ENCODE measurements at regions of chr18 and their contacts with region 1.

Region 1: DNA sequence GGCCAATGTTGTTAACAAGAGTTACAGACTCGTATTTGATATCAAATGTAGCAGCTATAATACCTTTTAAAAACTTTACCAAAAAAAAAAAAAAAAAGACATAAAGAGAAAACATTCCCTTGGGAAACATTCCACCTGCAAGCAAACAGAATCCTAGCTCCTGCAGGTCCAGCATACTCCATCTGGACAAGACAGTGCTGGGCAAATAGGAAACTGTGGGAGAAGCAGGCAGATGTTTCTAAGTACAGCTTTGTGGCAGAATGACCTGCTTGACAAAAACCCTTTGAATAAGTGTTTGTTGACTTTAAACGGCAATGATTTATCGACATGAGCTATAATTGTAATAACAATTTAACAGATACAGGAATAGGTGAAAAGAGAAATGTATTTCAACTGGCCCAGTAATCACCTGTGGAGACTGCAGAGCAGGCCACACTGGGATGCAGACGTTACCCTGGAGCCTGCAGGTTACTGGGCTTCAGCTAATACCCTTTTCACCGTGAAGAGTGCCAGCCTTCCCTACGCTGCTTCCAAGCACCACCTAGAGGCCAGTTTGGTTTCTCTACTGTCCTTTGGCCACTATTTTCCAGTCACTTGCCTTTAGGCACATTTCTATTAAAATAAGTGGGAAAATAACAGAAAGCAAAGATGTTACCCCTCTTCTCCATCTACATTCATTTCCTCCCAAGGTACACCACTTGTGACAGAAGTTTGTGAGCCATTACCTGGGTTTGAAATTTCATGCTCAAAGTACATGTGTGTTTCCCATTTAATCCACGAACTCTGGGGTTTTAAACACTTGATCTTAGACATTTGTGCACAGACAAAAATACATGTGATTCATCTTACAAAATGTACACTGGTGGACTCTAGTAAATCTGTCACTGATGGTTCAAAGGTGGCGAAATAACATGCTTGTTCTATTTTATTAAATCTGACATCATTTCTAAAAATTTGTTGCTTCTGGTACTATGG is 96.9 kb upstream of the ZNF397 start:
- DNase-seq: peak; percentile 51
- ATAC-seq: peak; percentile 65
- H3K4me3 Mint-ChIP-seq: no peak overlapping the region
- H3K27ac Mint-ChIP-seq: no peak overlapping the region
- H3K4me1 Mint-ChIP-seq: peaks cover 2% of the 10 kb centered on the region
- H3K27me3 Mint-ChIP-seq: no peaks in the 10 kb centered on the region
- CTCF ChIP-seq: peak; percentile 41

Region 2: GRCh38 chr18:35005963-35006577 is 137.8 kb before region 1 on chr18:
- CTCF ChIA-PET with region 1: interaction called, 24 read pairs
- POLR2A ChIA-PET with region 1: no interaction called
- intact Hi-C with region 1: loop called (anchors 2 kb)
- DNase-seq: no peak
- ATAC-seq: peak; percentile 83
- H3K4me3 Mint-ChIP-seq: no peak overlapping the region
- H3K27ac Mint-ChIP-seq: no peak overlapping the region
- H3K4me1 Mint-ChIP-seq: no peaks in the 10 kb centered on the region
- H3K27me3 Mint-ChIP-seq: no peaks in the 10 kb centered on the region
- CTCF ChIP-seq: peak; percentile 68

Region 3: DNA sequence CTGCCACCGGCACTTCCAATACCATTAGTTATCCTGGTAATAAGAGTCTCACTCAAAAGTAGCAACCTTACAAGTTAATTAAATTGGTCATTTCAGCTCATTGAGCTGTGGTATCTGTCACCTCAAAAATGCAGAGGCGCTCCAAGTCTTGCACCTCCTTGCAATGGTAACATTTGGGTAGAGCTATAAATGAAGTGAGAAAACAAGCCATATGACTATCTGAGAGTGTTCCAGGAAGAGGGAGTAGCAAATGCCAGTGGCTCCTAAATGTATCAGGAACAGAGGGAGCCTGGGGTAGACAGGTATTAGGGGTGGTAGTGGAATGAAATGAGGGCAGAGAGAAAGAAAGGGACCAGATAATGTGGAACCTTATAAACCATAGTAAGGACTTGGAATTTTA is 152.2 kb after region 1 on chr18:
- CTCF ChIA-PET with region 1: no interaction called
- POLR2A ChIA-PET with region 1: no interaction called
- intact Hi-C with region 1: no loop called
- DNase-seq: no peak
- ATAC-seq: no peak
- H3K4me3 Mint-ChIP-seq: no peak overlapping the region
- H3K27ac Mint-ChIP-seq: no peak overlapping the region
- H3K4me1 Mint-ChIP-seq: peaks cover 34% of the 10 kb centered on the region
- H3K27me3 Mint-ChIP-seq: no peaks in the 10 kb centered on the region
- CTCF ChIP-seq: no peak

Region 4: GRCh38 chr18:35361570-35362321 is 217.8 kb after region 1 on chr18:
- CTCF ChIA-PET with region 1: no interaction called
- POLR2A ChIA-PET with region 1: no interaction called
- intact Hi-C with region 1: no loop called
- DNase-seq: no peak
- ATAC-seq: no peak
- H3K4me3 Mint-ChIP-seq: no peak overlapping the region
- H3K27ac Mint-ChIP-seq: no peak overlapping the region
- H3K4me1 Mint-ChIP-seq: no peaks in the 10 kb centered on the region
- H3K27me3 Mint-ChIP-seq: no peaks in the 10 kb centered on the region
- CTCF ChIP-seq: no peak

Measured in activated CD8-positive, alpha-beta T cell treated with anti-CD3 and anti-CD28 coated beads for 36 hours (primary cell).